ENCODE measurements at regions of chr9 and their contacts with region 1.

Region 1: GRCh38 chr9:125631391-125632085 is 75.5 kb downstream of the MAPKAP1 start:
- DNase-seq: peak; percentile 38
- H3K4me3 Mint-ChIP-seq: no peak overlapping the region
- H3K27ac Mint-ChIP-seq: peak overlapping the region; percentile 58
- H3K4me1 Mint-ChIP-seq: peaks cover 76% of the 10 kb centered on the region
- H3K27me3 Mint-ChIP-seq: no peaks in the 10 kb centered on the region

Region 2: DNA sequence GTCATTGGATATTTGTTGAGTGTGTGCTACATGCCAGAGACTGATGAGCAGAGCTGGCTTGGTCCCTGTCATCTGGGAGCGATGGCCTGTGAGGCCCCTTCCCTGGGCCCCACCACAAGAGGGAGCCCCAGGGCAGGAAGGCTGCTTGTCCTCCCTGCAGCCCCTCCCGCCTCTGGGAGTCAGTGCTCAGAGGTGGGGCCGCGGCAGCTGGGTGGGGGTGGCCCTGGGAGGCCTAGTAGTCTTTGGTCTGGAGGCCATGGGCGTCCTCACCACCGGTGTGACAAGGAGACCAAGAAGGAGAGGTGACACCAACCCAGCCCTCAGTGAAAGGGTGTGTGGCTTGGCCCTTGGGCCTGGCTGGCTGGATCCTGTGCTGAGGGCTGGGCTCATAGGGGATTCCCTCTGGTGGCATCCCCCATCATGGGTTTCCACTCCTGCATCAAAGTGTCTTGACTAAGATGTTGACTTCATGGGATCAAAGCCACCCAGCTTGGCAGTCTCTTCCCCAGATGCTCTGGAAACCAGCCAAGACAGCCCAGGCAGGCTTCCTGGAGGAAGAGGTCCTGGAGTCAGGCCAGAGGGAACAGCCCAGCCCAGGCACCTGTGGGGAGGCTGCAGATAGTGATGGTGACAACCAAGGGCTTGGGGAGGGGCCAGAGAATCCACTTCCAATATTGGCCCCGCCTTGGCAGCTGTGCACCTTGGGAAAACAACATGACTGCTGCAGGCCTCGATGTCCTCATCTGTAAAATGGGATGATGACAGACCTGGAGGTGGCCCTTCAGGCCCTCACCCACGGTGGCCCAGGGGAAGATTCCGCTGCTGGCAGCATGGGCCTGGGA is 203.3 kb before region 1 on chr9:
- CTCF ChIA-PET with region 1: no interaction called
- POLR2A ChIA-PET with region 1: no interaction called
- intact Hi-C with region 1: loop called (anchors 1 kb)
- DNase-seq: peak; percentile 42
- H3K4me3 Mint-ChIP-seq: no peak overlapping the region
- H3K27ac Mint-ChIP-seq: no peak overlapping the region
- H3K4me1 Mint-ChIP-seq: no peaks in the 10 kb centered on the region
- H3K27me3 Mint-ChIP-seq: no peaks in the 10 kb centered on the region

Region 3: GRCh38 chr9:125650271-125650737 is 18.8 kb after region 1 on chr9:
- CTCF ChIA-PET with region 1: interaction called, 7 read pairs
- POLR2A ChIA-PET with region 1: interaction called, 8 read pairs
- intact Hi-C with region 1: loop called (anchors 1 kb)
- DNase-seq: peak; percentile 42
- H3K4me3 Mint-ChIP-seq: peak overlapping the region; percentile 14
- H3K27ac Mint-ChIP-seq: peak overlapping the region; percentile 62
- H3K4me1 Mint-ChIP-seq: peaks cover 66% of the 10 kb centered on the region
- H3K27me3 Mint-ChIP-seq: no peaks in the 10 kb centered on the region

Region 4: DNA sequence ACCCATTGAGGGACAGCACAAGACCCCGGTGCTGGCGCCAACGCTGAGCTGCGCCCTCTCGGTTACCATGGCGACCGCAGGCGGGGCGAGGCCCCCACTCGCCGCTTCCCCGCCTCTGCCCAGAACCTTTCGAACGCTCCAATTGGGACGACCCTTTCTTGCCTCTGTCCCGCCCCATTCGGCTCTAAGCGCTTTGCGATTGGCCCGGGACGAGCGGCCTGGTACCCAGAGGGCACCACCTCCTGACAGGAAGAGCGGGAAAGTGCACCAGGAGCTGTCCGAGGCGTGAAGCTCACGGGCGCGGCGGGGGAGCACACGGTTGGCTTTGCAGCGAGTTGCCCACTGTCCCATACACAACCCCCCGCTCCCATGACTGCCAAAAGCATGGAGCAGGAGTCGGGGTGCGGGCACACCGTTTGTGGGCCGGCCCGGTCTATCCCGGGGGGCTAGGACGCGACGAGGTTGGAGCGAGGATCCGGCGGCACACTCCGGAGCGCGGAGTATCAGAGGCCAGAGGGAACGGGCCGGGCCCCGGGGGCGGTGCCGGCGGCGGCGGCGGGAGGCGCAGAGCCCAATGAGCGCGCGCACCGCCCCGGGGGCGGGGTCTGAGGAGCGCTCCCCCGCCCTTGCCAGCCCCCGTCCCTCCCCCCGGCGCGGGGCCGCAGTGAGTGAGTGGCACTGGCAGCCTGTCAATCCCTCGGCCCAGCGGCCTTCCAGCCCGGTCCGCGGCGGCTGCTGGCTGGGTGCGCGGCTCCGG is 114.7 kb after region 1 on chr9:
- CTCF ChIA-PET with region 1: no interaction called
- POLR2A ChIA-PET with region 1: no interaction called
- intact Hi-C with region 1: loop called (anchors 5 kb)
- DNase-seq: peak; percentile 95
- H3K4me3 Mint-ChIP-seq: peak overlapping the region; percentile 86
- H3K27ac Mint-ChIP-seq: peak overlapping the region; percentile 95
- H3K4me1 Mint-ChIP-seq: peaks cover 31% of the 10 kb centered on the region
- H3K27me3 Mint-ChIP-seq: peaks cover 3% of the 10 kb centered on the region

Region 5: GRCh38 chr9:126471084-126471624 is 839.6 kb after region 1 on chr9:
- CTCF ChIA-PET with region 1: no interaction called
- POLR2A ChIA-PET with region 1: no interaction called
- intact Hi-C with region 1: loop called (anchors 1 kb)
- DNase-seq: peak; percentile 92
- H3K4me3 Mint-ChIP-seq: peak overlapping the region; percentile 51
- H3K27ac Mint-ChIP-seq: peak overlapping the region; percentile 49
- H3K4me1 Mint-ChIP-seq: peaks cover 48% of the 10 kb centered on the region
- H3K27me3 Mint-ChIP-seq: peaks cover 7% of the 10 kb centered on the region

Measured in activated CD4-positive, alpha-beta memory T cell treated with anti-CD3 and anti-CD28 coated beads for 36 hours (primary cell).